A673 (cell line): ENCODE measurements at regions of chr2 and their contacts with region 1.

Region 1: DNA sequence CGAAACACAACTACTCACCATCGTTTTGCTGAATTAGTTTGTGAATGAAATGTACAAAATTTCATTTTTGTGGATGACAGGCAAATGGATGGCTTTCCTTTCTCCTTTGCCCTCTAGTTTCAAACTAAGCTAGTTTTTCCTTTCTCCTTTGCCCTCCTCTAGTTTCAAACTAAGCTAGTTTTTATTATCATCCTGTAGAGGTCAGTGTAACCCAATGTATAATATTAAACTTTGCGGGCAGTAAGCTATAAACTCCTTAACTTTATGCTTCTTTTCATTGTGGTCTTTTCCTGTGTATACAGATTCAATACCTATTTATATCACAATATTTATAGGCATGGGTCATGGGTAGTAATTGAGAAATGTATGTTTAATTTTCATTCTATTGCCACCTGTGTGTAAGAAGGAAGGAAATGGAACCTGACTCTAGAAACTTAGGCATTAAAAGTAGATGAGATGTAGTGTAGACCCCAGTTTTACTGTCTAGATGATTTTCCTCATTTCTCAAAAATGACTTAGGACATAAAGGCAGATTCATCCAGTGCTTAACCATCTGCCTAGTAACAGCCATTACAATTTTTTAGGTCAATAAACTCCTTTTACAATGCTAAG is 58.1 kb downstream of the MAP3K19 start:
- DNase-seq: peak; percentile 49
- H3K4me3 ChIP-seq: no peak overlapping the region
- H3K27ac ChIP-seq: no peak overlapping the region
- H3K4me1 ChIP-seq: no peaks in the 10 kb centered on the region
- H3K27me3 ChIP-seq: peaks cover 17% of the 10 kb centered on the region
- CTCF ChIP-seq: peak; percentile 61

Region 2: GRCh38 chr2:135052042-135052876 is 63.2 kb after region 1 on chr2 and contains the start of gene RAB3GAP1:
- CTCF ChIA-PET with region 1: no interaction called
- POLR2A ChIA-PET with region 1: interaction called, 10 read pairs
- intact Hi-C with region 1: no loop called
- DNase-seq: peak; percentile 91
- H3K4me3 ChIP-seq: peak within 1 kb of the TSS; percentile 82
- H3K27ac ChIP-seq: peak within 1 kb of the TSS; percentile 94
- H3K4me1 ChIP-seq: peaks cover 28% of the 10 kb centered on the region
- H3K27me3 ChIP-seq: no peaks in the 10 kb centered on the region
- CTCF ChIP-seq: no peak
- total RNA-seq, gene RAB3GAP1: 38.9 and 39.8 TPM in 2 replicates

Region 3: DNA sequence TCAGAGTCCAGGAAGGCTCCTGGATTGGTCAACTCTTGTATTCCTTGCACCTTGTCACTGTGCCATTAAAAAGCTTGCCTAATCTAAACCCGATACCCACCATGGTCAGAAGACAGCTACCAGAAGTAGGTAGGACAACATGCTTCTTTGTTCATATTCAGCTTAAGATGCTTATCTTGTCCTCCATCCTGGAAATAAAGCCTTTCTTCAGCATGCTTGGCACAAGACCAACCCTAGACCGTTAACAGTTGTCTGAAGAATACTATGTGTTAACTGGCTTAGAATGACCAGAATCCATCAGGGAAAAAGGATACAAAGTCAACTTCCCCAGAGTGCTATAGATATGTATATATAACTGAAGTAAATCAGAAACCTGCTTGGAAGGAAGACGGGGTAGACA is 348.0 kb after region 1 on chr2:
- CTCF ChIA-PET with region 1: no interaction called
- POLR2A ChIA-PET with region 1: no interaction called
- intact Hi-C with region 1: no loop called
- DNase-seq: peak; percentile 33
- H3K4me3 ChIP-seq: no peak overlapping the region
- H3K27ac ChIP-seq: no peak overlapping the region
- H3K4me1 ChIP-seq: no peaks in the 10 kb centered on the region
- H3K27me3 ChIP-seq: no peaks in the 10 kb centered on the region
- CTCF ChIP-seq: no peak

Region 4: DNA sequence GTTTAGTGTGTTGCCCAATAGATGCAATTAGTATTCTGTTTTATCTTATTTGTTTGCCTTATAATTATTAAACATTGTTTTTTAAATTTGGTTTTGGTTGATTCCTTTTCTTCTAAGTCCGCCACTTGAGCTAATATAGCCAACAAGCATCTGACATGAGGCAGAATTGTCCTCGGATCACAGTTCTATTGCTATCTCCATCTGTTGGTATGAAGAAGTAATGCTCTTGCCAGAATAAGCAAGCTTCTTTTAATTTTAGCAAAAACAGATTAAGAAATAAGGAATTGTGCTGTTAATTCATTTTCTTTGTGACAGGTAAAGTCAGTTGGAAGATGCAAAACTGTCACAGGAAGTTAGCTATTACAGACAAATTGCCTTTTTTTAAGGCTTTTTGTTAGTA is 596.5 kb after region 1 on chr2:
- CTCF ChIA-PET with region 1: no interaction called
- POLR2A ChIA-PET with region 1: no interaction called
- intact Hi-C with region 1: no loop called
- DNase-seq: peak; percentile 45
- H3K4me3 ChIP-seq: no peak overlapping the region
- H3K27ac ChIP-seq: no peak overlapping the region
- H3K4me1 ChIP-seq: peaks cover 16% of the 10 kb centered on the region
- H3K27me3 ChIP-seq: no peaks in the 10 kb centered on the region
- CTCF ChIP-seq: peak; percentile 52; the same call in 1 of the 2 replicates

Region 5: DNA sequence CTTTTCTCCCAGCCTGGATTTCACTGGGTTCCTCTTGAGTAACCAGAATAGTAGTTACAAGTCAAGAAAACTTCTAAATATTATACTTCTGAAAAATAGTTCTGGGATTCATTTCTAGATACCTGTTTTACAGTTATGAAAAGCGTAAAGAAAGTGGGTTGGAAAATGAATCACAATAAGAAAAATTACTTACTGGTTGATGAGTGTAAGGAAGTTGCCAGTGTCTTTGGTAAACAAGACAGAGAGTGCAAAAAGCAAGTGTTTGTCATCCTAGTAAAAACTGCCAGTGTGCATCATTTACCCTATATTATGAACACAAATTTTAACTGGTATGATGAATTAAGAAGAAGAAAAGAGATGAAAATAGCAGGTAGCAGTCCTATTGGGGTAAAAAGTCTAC is 631.1 kb after region 1 on chr2:
- CTCF ChIA-PET with region 1: no interaction called
- POLR2A ChIA-PET with region 1: no interaction called
- intact Hi-C with region 1: no loop called
- DNase-seq: no peak
- H3K4me3 ChIP-seq: no peak overlapping the region
- H3K27ac ChIP-seq: no peak overlapping the region
- H3K4me1 ChIP-seq: no peaks in the 10 kb centered on the region
- H3K27me3 ChIP-seq: no peaks in the 10 kb centered on the region
- CTCF ChIP-seq: no peak

Region 6: DNA sequence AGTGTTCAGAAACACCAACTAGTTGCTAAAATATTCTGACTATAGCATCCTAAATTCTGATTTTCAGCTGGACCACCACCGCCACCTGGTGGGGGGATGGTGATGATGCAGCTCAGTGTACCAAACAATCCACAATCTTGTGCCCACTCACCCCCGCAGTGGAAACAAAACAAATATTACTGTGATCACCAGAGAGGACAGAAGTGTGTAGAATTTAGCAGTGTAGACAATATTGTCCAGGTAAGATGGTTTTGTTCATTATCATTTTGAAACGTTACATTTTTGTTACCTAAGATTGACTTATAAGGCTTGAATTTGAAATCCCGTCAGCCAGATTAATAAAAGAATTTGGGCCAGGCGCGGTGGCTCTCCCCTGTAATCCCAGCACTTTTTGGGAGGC is 720.9 kb after region 1 on chr2:
- CTCF ChIA-PET with region 1: interaction called, 10 read pairs
- POLR2A ChIA-PET with region 1: no interaction called
- intact Hi-C with region 1: no loop called
- DNase-seq: peak; percentile 63
- H3K4me3 ChIP-seq: no peak overlapping the region
- H3K27ac ChIP-seq: no peak overlapping the region
- H3K4me1 ChIP-seq: no peaks in the 10 kb centered on the region
- H3K27me3 ChIP-seq: no peaks in the 10 kb centered on the region
- CTCF ChIP-seq: peak; percentile 92

Region 7: DNA sequence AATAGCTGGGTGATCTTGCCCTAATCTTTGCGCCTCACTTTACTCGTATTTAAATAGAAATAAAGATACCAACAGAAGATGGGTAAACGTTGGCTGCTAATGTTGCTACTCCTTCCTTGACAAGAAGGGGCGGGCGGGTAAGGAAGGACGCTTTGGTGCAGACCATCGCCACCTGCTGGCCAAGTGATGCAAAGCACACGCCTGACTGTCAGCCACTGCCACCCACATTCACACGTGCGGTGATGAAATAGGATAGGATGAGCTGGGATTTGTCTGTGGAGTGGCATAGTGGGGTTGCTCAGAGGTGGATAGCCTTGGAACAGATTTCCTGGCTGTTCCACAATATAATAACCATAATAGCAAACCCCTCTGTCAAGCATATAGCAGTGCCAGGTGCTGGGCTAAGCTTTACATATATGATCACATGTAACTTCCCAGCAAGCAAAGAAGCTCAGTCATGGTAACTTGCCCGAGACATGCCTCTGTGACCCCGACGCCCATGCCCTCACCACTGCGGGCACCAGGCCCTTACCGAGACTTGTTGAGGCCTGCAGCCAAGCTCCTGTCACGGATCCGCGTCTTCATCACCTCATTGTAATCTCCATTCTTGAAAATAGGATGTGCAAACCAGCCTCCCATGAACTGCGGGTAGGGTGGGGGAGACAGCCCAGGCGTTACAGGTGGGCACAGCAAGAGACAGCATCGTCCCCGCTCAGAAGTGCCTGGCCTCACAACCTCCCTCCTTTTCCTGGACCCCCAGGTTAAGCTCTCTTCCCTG is 808.6 kb after region 1 on chr2:
- CTCF ChIA-PET with region 1: interaction called, 14 read pairs
- POLR2A ChIA-PET with region 1: no interaction called
- intact Hi-C with region 1: loop called (anchors 5 kb)
- DNase-seq: peak; percentile 87
- H3K4me3 ChIP-seq: no peak overlapping the region
- H3K27ac ChIP-seq: no peak overlapping the region
- H3K4me1 ChIP-seq: no peaks in the 10 kb centered on the region
- H3K27me3 ChIP-seq: no peaks in the 10 kb centered on the region
- CTCF ChIP-seq: peak; percentile 98

Region 8: DNA sequence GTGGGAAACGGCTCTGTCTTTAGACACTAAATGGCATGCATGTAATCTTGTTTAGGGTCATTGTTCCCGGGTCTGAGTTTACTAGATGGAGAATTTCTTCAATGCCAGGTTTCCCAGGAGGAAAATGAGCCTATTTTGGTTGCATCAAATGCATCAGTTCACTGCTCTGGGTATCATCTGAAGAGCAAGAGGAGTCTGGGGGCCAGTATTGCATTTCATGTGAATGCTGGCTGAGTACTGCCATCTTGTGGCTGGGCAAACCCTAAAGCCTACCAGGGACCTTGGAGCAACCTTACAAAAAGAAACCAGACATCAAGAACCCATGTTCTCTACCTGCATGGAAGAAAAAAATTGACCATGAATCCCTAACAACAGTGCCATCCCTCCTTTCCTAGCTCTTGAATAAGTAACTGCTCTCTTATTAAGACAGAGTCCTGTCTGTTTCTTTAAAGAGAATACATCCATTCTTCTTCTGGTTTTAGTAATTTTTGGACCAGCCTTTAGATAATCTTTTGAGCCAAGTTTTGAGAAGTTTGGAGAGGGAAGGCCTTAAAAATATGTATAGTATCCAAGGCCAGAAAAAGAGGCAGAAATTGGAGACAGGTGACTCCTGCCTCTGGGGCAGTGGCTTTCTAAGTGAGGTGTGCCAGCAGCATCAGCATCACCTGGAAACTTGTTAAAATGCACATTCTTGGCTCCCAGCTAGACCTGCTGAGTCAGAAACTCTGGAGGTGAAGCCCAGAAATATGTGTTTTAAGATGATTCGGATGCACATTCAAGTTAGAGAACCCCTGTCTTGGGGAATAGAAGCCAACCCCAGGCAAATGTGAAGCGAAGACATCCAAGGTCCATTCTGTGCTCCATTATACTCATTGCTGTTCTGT is 1389.9 kb after region 1 on chr2:
- CTCF ChIA-PET with region 1: no interaction called
- POLR2A ChIA-PET with region 1: no interaction called
- intact Hi-C with region 1: loop called (anchors 5 kb)
- DNase-seq: peak; percentile 54
- H3K4me3 ChIP-seq: no peak overlapping the region
- H3K27ac ChIP-seq: no peak overlapping the region
- H3K4me1 ChIP-seq: no peaks in the 10 kb centered on the region
- H3K27me3 ChIP-seq: no peaks in the 10 kb centered on the region
- CTCF ChIP-seq: peak; percentile 71